Right cardiac atrium (tissue), 5 donors: ENCODE measurements at regions of chr6 and their contacts with region 1.

Region 1: DNA sequence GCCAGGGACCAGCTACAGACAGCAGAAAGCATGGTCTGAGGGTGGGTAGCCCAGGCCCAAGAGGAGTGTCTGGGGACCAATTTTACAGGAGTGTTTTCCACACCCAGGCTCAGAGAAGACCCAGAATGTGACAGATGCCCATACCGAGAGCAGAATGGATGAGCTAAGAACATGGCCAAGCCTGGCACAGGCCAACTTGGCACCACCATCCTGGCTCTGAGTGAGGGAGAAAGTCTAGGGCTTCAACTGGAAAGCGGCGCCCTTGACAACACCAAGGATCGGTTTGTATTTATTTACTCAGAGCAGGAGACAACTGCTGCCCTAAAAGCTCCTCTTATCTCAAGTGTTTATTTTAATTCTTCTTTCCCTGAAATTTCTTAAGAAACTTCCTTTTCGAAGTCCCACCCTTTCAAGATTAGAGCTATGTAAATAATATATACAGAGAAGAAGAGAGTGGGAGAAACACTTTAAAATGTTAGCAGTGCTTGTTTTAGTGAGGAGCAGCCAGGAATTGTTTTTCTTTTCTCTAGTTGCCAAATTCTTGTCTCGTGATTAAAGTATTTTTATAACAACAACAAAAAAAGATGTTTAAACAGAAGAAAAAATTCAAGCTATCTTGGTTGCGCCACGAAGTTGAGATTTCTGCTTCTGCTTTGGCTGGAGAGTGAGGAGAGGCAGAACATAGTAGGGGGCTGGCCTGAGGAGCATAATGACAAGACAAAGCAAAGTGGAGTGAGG is 16.2 kb downstream of the TNXB start:
- DNase-seq: peak; percentile 60 to 83 (median 82)
- ATAC-seq: peak; percentile 60 to 62
- H3K4me3 ChIP-seq: no peak overlapping the region
- H3K27ac ChIP-seq: peak overlapping the region; percentile 86
- H3K4me1 ChIP-seq: peaks cover 3% of the 10 kb centered on the region
- H3K27me3 ChIP-seq: no peaks in the 10 kb centered on the region

Region 2: GRCh38 chr6:32047850-32048766 is 44.8 kb before region 1 on chr6:
- intact Hi-C with region 1: loop called in 1 of 4 experiments (anchors 10 kb)
- DNase-seq: peak; percentile 77 to 91 (median 89)
- ATAC-seq: peak; percentile 38 to 54
- H3K4me3 ChIP-seq: no peak overlapping the region
- H3K27ac ChIP-seq: peak overlapping the region; percentile 28
- H3K4me1 ChIP-seq: peaks cover 3% of the 10 kb centered on the region
- H3K27me3 ChIP-seq: no peaks in the 10 kb centered on the region